Lower leg skin (tissue), 4 donors: ENCODE measurements at regions of chr1 and their contacts with region 1.

Region 1: GRCh38 chr1:161098210-161099068 is at the start of gene KLHDC9:
- DNase-seq: peak in 1 of 2 donors; percentile 91
- H3K4me3 ChIP-seq: peak within 1 kb of the TSS; percentile 31
- CTCF ChIP-seq: no peak
- POLR2A ChIP-seq: no peak
- total RNA-seq, gene KLHDC9: 0.42 to 4.2 (median 1.9) TPM

Region 2: DNA sequence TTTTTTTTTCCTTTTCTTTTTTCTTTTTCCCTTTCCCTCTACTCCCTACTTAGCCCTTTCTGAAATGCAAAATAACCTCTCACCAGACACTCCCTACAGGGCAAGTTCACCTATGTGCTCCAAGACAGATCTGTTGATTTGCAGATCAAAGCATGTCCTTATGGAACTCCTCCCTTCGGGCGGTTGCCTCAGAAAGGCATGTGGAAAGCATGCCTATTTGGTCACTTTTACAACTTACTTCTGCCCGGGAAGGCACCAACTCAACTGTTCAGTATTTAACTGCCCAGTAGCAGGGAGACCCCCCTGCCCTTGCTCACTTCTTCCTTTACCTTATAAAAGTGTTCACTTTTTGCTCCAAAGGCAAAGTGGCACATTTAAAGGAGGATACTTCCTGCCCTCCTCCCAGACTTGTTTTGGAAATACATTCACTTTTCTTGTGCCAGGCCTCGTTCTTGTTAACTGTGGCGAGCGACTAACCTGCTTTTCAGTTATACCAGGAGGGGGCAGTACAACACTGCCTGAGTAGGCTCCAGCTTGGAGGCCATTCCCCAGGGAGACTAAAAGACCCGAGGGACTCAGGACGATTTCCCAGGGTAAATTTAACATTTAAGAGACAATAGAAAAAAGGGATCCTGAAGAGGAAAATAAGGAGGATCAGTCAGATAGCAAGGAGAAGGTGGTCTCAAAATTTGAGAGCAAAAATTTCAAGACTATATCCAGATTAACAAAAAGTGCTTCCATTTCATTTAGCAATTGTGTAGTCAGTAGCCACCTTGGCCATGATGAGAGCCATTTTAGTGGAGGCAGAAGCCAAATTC is 371.7 kb before region 1 on chr1:
- intact Hi-C with region 1: loop called (anchors 10 kb)
- DNase-seq: peak in 1 of 2 donors; percentile 40
- H3K4me3 ChIP-seq: no peak overlapping the region
- CTCF ChIP-seq: no peak
- POLR2A ChIP-seq: no peak

Region 3: GRCh38 chr1:160942926-160943325 is 155.5 kb before region 1 on chr1:
- intact Hi-C with region 1: no loop called
- DNase-seq: no peak
- H3K4me3 ChIP-seq: no peak overlapping the region
- CTCF ChIP-seq: no peak
- POLR2A ChIP-seq: no peak

Region 4: DNA sequence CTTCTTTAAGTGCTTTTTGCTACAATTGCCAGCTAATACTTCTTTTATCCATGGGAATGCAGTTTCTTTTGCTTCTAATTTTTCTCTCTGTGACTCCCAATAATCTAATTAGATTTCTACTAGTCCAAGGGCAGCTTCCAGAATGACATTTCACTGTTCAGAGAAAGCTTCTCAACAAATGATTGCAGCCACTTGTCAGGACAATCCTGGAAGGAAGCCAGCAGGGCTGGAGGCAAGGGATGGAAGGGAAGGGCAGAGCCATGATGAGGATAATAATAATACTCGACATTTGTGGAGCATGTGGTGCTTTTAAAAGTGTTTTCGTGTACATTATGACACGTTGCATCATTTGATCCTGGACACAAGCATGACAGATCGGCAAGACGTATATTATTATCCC is 96.9 kb before region 1 on chr1:
- intact Hi-C with region 1: loop called (anchors 5 kb)
- DNase-seq: no peak
- H3K4me3 ChIP-seq: no peak overlapping the region
- CTCF ChIP-seq: no peak
- POLR2A ChIP-seq: no peak